Activated naive CD4-positive, alpha-beta T cell treated with anti-CD3 and anti-CD28 coated beads for 36 hours (primary cell): ENCODE measurements at regions of chr12 and their contacts with region 1.

Region 1: DNA sequence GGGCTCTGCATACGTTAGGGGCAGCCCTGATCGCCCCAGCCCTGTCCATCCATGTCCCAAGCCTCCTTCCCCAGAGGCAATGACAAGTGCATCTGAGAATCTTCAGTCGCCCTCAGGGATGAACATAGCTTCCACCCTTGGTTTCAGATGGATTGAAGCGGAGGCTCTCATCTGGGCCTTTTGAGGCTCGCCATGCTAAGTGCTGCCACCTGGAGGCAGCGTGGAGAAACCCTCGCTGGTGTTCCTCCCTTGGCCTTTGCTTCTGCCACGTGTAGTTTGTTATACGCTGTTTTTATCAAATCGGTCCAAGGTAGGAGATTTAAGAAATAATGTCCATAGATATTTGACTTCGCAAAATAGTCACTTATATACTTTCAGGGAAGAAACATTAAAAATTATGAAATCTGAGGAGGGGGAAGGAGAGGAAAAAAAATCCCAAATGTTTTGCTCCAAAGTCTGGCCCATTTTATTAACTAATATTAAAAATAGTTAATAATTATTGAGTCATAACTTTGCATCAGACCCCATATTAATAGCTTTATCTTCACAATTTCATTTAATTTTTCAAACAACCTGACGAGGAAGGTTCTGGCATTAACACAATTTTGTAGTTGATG is 28.8 kb upstream of the LRRC10 start:
- DNase-seq: peak; percentile 74
- H3K4me3 Mint-ChIP-seq: no peak overlapping the region
- H3K27ac Mint-ChIP-seq: no peak overlapping the region
- H3K4me1 Mint-ChIP-seq: peaks cover 2% of the 10 kb centered on the region
- H3K27me3 Mint-ChIP-seq: no peaks in the 10 kb centered on the region

Region 2: DNA sequence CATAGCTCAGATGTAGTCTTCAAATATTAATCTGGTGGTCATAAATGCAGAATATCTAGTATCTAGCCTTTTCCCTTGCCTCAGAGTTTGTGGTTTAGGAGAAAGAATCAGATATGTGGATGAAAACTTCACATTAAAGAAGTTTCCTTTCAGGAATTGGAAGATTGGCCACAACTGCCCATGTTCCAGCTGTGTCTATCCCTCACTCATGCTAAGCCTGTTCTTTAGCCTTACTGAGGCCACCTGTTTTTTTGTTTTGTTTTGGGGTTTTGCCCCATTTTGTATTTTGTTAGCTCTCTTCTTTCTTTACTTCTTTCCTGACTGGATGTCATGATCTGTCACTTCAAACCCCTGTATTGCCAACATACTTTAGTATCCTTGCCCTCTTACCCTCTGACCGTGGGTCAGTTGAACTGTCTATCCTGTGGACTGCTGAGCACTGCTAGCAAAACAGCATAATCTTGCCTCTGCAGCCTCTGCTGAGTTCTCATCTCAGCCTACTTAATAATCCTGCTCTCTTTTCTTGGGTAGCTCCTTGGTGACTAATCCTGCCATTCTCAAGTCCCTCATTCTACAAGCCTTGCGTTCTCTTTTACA is 76.2 kb before region 1 on chr12:
- CTCF ChIA-PET with region 1: no interaction called
- intact Hi-C with region 1: no loop called
- DNase-seq: no peak
- H3K4me3 Mint-ChIP-seq: no peak overlapping the region
- H3K27ac Mint-ChIP-seq: no peak overlapping the region
- H3K4me1 Mint-ChIP-seq: peaks cover 3% of the 10 kb centered on the region
- H3K27me3 Mint-ChIP-seq: no peaks in the 10 kb centered on the region

Region 3: DNA sequence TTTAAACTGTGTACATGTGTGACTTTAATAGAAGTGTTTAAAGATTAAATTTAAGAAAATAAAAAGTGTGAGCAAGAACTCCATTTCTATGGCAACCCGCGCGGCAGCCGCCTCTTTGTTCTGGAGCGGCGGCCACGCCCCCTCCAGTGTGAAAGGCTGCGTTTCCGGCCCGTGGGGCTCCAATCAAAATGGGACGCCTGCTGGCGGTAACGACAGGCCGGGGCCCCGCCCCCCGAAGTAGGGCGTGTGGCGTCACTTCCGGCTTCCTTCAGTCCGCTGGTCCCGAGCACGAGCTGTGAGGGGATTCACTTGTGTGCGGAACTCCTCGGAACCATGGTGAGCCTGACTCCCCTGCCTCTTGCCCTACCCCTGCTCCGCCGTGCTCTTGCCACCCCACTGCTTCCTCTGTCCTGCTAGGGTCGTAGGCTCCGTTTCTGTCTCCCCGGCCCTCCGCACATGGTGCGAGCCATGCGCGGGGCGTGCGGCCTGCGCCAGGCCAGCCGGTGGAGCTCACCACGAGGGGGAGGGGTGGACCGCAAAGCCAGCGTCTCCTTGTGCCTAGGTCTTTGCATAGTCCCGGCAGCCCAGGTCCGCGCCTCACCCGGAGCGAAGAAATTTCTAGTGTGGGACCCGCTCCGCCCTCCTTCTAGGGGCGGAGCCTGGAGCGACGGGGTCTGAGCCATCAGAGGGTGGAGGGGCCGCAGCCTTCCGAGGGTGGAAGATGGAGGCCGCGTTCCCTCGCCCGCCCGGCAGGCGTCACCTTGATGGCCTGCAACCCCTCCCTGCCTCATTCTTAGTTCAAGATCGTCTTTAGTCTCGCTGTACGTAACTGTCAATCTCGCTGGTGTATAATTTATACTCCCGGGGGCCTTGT is 54.1 kb before region 1 on chr12 and contains the start of gene CCT2:
- CTCF ChIA-PET with region 1: interaction called, 3 read pairs
- intact Hi-C with region 1: loop called (anchors 1 kb)
- DNase-seq: peak; percentile 97
- H3K4me3 Mint-ChIP-seq: peak within 1 kb of the TSS; percentile 86
- H3K27ac Mint-ChIP-seq: peak within 1 kb of the TSS; percentile 92
- H3K4me1 Mint-ChIP-seq: peaks cover 27% of the 10 kb centered on the region
- H3K27me3 Mint-ChIP-seq: no peaks in the 10 kb centered on the region
- total RNA-seq, gene CCT2: 268 to 280 TPM

Region 4: DNA sequence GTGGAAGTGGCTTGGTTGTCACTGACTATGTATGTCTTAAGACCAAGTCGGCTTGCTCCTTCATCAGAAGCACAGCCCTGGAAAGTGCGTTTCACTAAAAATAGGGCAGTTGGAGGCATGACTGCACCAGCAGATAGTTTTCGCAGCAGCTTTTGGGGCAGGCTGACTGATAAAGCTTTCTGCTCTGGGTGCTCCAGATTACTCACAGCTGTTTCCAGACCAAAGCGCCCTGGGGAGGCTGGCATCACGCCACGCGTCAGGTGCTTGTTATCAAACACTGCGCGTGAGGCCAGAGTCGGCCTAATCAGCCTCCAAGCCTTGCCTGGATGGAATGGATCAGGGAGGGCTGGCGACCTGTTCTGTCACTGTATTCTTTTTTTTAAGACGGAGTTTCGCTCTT is 15.5 kb before region 1 on chr12:
- CTCF ChIA-PET with region 1: interaction called, 12 read pairs
- intact Hi-C with region 1: no loop called
- DNase-seq: no peak
- H3K4me3 Mint-ChIP-seq: no peak overlapping the region
- H3K27ac Mint-ChIP-seq: no peak overlapping the region
- H3K4me1 Mint-ChIP-seq: no peaks in the 10 kb centered on the region
- H3K27me3 Mint-ChIP-seq: peaks cover 3% of the 10 kb centered on the region

Region 5: DNA sequence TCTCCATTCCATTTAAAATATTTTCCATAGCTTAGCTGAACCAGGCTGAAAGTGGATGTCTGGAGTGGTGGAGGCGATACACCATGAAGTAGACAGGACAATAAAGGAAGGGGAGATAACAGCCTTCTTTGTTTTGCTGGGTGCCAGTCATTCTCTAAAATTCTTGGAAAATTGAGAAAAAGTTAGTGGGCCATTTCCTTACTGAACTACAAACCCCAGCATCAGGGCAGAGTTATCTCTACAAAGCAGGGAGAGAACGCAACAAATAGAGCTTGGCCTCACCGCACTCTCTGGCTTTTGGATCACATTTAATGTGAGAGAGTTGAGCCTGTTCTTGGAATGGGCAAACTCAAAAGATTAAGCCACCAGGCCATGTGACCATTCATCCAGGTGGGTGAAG is 12.4 kb after region 1 on chr12:
- CTCF ChIA-PET with region 1: interaction called, 14 read pairs
- intact Hi-C with region 1: no loop called
- DNase-seq: no peak
- H3K4me3 Mint-ChIP-seq: no peak overlapping the region
- H3K27ac Mint-ChIP-seq: no peak overlapping the region
- H3K4me1 Mint-ChIP-seq: no peaks in the 10 kb centered on the region
- H3K27me3 Mint-ChIP-seq: peaks cover 12% of the 10 kb centered on the region

Region 6: GRCh38 chr12:69755302-69755701 is 115.8 kb after region 1 on chr12:
- CTCF ChIA-PET with region 1: no interaction called
- intact Hi-C with region 1: no loop called
- DNase-seq: no peak
- H3K4me3 Mint-ChIP-seq: no peak overlapping the region
- H3K27ac Mint-ChIP-seq: no peak overlapping the region
- H3K4me1 Mint-ChIP-seq: peaks cover 11% of the 10 kb centered on the region
- H3K27me3 Mint-ChIP-seq: no peaks in the 10 kb centered on the region